RWPE1 (cell line): ENCODE measurements at regions of chr1 and their contacts with region 1.

Region 1: GRCh38 chr1:153352523-153352922 is 3.9 kb upstream of the PGLYRP4 start:
- DNase-seq: peak; percentile 75
- H3K27ac ChIP-seq: no peak overlapping the region
- CTCF ChIP-seq: peak; percentile 88

Region 2: GRCh38 chr1:153404768-153405167 is 52.2 kb after region 1 on chr1:
- CTCF ChIA-PET with region 1: interaction called, 11 read pairs
- POLR2A ChIA-PET with region 1: no interaction called
- DNase-seq: peak; percentile 58
- H3K27ac ChIP-seq: no peak overlapping the region
- CTCF ChIP-seq: peak; percentile 59

Region 3: DNA sequence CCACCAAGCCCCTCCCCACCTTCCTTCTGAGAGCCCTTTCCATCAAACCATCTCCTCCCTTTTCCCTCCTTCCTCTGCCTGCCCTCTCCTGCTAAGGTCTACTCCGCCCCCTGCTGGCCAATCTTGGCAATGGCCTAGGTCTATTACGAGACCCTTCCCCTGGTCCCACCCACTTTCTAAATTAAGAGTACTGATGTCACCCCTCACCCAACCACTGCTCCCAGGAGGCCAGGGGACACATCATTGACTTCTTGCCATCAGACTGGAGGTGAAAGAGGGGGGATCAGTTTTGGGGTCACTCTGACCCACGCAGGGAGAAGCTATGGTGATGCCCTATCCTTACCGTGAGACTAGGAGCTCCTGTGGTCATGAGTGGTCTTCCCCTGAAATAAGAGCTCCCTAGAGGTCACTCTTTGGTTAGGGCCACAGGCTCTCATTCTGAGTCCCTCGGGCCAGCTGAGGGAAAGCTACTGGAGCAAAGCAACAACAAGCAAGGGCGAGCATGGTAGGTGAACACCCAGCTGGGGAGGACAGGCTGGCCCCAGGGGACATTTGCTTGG is 142.5 kb after region 1 on chr1:
- CTCF ChIA-PET with region 1: interaction called, 143 read pairs
- POLR2A ChIA-PET with region 1: no interaction called
- DNase-seq: peak; percentile 61
- H3K27ac ChIP-seq: no peak overlapping the region
- CTCF ChIP-seq: peak; percentile 89